Activated T-helper 1 cell treated with anti-CD3 and anti-CD28 coated beads, Interleukin-12 subunit alpha, Interleukin-12 subunit beta, Interleukin-2, Interleukin-4 antibody, amounts not matched to agents 30 ng/mL and 10 ng/mL and 1 ng/mL, durations not matched to agents 14 hours and 24 hours and 36 hours (primary cell): ENCODE measurements at regions of chr2 and their contacts with region 1.

Region 1: GRCh38 chr2:64767670-64768468 is 114.2 kb upstream of the SERTAD2 start:
- DNase-seq: peak; percentile 69
- H3K4me3 Mint-ChIP-seq: peak overlapping the region; percentile 91
- H3K27ac Mint-ChIP-seq: peak overlapping the region; percentile 95
- H3K4me1 Mint-ChIP-seq: peaks cover 47% of the 10 kb centered on the region
- H3K27me3 Mint-ChIP-seq: no peaks in the 10 kb centered on the region

Region 2: DNA sequence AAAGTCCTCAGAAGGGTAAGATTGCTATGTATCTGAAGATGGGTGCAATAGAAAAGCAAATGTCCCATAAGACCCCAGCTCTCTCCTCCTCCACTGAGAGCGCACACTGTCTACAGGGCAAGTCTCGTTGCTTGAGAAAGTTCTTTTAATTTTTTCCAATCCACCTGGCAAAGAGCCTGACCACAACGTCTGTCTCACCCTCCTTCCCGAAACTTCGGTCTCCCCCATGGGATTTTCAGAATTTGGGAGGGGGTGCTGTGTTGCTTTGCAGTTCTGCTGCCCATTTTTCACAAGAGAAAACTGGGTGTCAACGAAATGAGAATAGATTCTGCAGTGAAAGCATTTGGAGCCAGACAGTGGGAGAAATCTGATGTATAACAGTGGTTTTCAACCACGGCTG is 154.6 kb before region 1 on chr2:
- intact Hi-C with region 1: no loop called
- DNase-seq: no peak
- H3K4me3 Mint-ChIP-seq: no peak overlapping the region
- H3K27ac Mint-ChIP-seq: no peak overlapping the region
- H3K4me1 Mint-ChIP-seq: peaks cover 2% of the 10 kb centered on the region
- H3K27me3 Mint-ChIP-seq: peaks cover 13% of the 10 kb centered on the region

Region 3: DNA sequence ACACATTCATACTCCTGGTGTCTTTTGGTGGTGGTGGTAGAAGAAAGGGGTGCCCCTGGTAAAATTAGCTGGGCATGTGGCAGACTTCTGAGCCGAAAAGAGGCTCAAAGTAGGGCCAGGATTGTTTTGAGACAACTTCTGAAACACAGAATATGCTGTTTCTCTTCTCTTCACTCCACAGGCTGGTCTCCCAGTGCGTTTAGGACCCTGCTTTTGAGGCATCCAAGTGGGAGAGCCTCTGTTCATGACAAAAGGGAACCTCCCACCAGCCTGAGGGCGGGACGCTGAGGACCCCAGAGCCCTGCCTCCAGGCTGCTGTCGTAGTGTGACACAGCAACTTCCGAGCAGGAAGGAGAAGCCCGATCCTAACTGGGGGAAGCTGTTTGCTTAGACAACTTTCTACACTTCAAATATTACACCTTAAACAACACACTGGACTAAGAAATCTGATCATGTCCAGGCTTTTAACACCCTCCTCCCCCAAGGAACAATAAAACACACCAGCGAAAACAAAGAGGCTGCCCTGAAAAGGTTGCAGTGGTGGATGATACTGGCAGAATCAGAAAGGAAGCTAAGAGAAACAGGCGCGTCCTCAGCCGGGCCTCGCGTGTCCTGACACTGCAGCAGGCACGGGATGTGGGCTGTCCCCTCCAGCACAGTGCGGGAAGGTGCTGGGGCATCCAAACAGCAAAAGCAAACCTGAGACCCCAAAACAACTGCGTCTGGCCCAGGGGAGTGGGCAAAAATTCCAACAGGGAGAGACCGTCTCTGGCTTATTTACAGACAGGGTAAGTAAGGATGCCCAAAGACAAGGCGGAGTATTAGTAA is 123.5 kb before region 1 on chr2:
- intact Hi-C with region 1: loop called (anchors 1 kb)
- DNase-seq: peak; percentile 51
- H3K4me3 Mint-ChIP-seq: peak overlapping the region; percentile 86
- H3K27ac Mint-ChIP-seq: peak overlapping the region; percentile 90
- H3K4me1 Mint-ChIP-seq: peaks cover 82% of the 10 kb centered on the region
- H3K27me3 Mint-ChIP-seq: peaks cover 3% of the 10 kb centered on the region

Region 4: GRCh38 chr2:64675860-64676259 is 92.0 kb before region 1 on chr2:
- intact Hi-C with region 1: loop called (anchors 2 kb)
- DNase-seq: peak; percentile 30
- H3K4me3 Mint-ChIP-seq: no peak overlapping the region
- H3K27ac Mint-ChIP-seq: peak overlapping the region; percentile 56
- H3K4me1 Mint-ChIP-seq: peaks cover 48% of the 10 kb centered on the region
- H3K27me3 Mint-ChIP-seq: no peaks in the 10 kb centered on the region

Region 5: GRCh38 chr2:64807417-64807816 is 39.5 kb after region 1 on chr2:
- intact Hi-C with region 1: loop called (anchors 1 kb)
- DNase-seq: peak; percentile 12
- H3K4me3 Mint-ChIP-seq: peak overlapping the region; percentile 57
- H3K27ac Mint-ChIP-seq: peak overlapping the region; percentile 80
- H3K4me1 Mint-ChIP-seq: peaks cover 37% of the 10 kb centered on the region
- H3K27me3 Mint-ChIP-seq: no peaks in the 10 kb centered on the region

Region 6: DNA sequence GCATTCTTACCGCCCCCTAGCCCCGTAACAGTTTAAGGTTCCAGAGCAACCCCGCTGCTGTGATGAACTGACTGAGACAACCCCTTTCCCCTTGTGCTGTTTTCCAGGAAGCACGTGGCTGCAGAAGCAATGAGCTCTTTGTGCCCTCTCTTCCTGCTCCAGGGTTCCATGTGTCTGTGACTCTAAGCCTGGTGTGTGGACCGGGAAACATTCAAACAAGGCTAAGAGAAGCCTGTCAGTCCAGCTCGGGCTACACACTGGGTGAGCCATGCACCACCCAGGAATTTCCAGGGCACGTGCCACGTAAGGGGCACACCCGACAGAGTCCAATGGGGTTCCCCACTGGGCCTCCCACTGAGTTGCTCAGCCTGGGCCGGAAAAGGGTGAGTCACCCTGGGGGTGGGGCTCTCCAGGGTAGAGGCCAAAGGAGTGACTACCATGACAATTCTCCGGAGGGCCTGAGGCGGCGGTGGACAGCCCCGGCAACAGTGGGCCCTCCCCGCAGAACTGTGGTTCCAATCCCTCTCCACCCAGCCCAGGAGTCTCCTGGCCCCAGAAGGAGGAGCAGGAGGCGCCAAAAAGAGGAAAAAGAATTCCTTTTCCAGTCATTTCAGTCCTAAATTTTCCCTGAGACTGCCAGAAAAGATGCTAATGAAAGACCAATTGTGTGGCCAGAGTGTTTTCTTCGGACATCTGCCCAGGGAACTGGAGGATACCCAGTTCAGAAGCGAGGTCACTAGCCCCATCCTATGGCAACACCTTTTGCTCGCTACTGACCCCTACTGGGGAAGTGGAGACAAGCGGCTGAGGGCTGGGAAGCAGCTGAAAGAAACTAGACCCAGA is 63.5 kb after region 1 on chr2:
- intact Hi-C with region 1: loop called (anchors 1 kb)
- DNase-seq: peak; percentile 73
- H3K4me3 Mint-ChIP-seq: no peak overlapping the region
- H3K27ac Mint-ChIP-seq: peak overlapping the region; percentile 73
- H3K4me1 Mint-ChIP-seq: peaks cover 31% of the 10 kb centered on the region
- H3K27me3 Mint-ChIP-seq: peaks cover 1% of the 10 kb centered on the region

Region 7: DNA sequence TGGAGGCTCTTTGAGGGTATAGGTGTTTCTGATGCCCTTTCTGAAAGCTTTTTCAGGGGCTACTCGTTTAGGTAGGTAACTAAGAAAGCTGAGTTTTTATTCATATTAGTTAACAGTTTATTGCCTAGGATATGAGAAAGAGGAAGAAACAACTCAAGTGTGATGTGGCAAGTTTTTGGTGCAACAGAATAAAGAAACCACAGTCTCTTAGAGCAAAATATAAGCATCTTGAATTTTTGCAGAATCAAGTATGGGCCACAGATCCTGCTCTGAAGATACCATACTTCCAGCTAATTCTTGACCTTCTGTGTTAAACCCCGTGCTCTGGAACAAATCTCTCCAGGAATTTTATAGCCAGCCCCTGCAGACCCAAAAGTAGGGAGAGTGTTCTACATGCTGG is 73.6 kb after region 1 on chr2:
- intact Hi-C with region 1: no loop called
- DNase-seq: no peak
- H3K4me3 Mint-ChIP-seq: no peak overlapping the region
- H3K27ac Mint-ChIP-seq: no peak overlapping the region
- H3K4me1 Mint-ChIP-seq: peaks cover 11% of the 10 kb centered on the region
- H3K27me3 Mint-ChIP-seq: no peaks in the 10 kb centered on the region